H1 (cell line): ENCODE measurements at regions of chr4 and their contacts with region 1.

Region 1: DNA sequence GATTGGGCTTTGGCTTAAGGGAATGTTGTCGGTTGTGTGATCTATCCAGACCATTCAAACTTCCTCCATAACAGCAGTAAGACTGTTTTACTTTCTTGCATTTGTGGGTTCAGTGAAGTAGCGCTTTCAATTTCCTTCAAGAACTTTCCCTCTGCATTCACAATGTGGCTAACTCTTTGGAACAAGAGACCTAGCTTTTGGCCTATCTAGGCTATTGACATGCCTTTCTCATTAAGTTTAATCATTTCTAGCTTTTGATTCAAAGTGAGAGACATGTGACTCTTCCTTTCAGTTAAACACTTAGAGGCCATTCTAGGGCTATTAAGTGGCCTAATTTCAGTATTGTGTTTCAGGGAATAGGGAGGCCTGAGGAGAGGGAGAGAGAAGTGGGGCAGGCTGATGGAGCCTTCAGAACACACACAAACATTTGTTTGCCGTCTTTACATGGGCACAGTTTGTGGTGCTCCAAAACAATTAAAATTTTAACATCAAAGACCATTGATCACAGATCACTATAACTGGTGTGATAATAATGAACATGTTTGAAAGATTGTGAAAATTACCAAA is 34.1 kb downstream of the ADH5 start:
- DNase-seq: no peak
- H3K4me3 ChIP-seq: no peak overlapping the region
- H3K27ac ChIP-seq: no peak overlapping the region
- H3K4me1 ChIP-seq: 0 out of 7 replicates have a peak, but pooled peaks cover 0 to 1% (median 0%) of the 10 kb centered on the region in 4 experiments
- H3K27me3 ChIP-seq: no peaks in the 10 kb centered on the region
- CTCF ChIP-seq: no peak
- EP300 ChIP-seq: no peak
- POLR2A ChIP-seq: no peak
- RAD21 ChIP-seq: no peak

Region 2: DNA sequence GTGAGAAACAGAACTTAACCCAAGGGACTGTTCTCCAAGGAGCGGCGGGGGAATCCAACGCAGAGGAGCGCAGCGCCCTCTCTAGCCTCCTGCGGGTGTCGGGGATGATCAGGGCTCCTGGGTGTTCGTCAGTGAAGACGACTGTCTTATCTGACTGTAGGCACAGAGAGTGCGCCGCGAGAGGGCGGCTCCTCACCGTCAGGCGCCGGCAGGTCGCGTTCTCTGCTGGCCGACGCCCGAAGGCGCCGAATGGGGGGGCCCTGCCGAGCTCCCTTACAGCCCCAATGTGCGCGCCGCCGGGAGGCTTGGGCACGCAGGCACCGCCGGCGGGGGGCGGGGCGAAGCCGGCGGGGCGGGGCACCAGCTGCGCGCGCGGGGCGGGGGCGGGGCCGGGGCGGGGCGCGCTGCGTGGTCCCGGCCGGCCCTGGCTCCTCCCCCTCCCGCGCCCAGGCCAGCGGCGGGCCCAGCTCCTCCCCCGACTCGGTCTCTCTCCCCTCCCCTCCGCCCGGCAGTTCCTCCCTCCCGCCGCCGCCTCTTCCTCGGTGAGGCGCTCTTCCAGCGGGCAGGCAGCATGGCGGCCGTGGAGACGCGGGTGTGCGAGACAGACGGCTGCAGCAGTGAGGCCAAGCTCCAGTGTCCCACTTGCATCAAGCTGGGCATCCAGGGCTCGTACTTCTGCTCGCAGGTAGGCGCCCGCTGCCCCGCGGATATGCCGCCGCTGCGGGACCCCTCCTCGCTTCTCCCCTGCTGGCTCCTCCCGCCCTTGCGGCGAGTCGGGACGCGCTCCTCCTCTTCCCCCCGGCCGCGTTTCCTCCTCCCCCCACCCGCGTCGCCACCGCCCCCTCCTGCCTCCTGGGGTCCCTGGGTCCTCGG is 59.1 kb before region 1 on chr4 and contains the start of gene METAP1:
- CTCF ChIA-PET with region 1: interaction called, 20 read pairs
- POLR2A ChIA-PET with region 1: interaction called, 18 read pairs
- DNase-seq: peak; percentile 87 to 93
- H3K4me3 ChIP-seq: peak within 1 kb of the TSS; percentile 68 to 93 (median 90)
- H3K27ac ChIP-seq: peak within 1 kb of the TSS; percentile 97
- H3K4me1 ChIP-seq: peaks cover 0 to 5% (median 2%) of the 10 kb centered on the region in 4 experiments; a peak in 3 of 7 replicates
- H3K27me3 ChIP-seq: no peaks in the 10 kb centered on the region
- CTCF ChIP-seq: peak; percentile 55 to 80 (median 71)
- EP300 ChIP-seq: no peak
- POLR2A ChIP-seq: peak; percentile 90 to 91
- RAD21 ChIP-seq: peak; percentile 72 to 79
- total RNA-seq, gene METAP1: 80.9 and 85.2 TPM in 2 replicates

Region 3: GRCh38 chr4:99013402-99013843 is 41.1 kb before region 1 on chr4:
- CTCF ChIA-PET with region 1: interaction called, 11 read pairs
- POLR2A ChIA-PET with region 1: interaction called, 3 read pairs
- DNase-seq: no peak
- H3K4me3 ChIP-seq: no peak overlapping the region; a peak in 1 of 8 replicates
- H3K27ac ChIP-seq: no peak overlapping the region; the same call in 1 of the 2 replicates
- H3K4me1 ChIP-seq: peaks cover 0 to 2% (median 0%) of the 10 kb centered on the region in 4 experiments; a peak in 2 of 7 replicates
- H3K27me3 ChIP-seq: no peaks in the 10 kb centered on the region
- CTCF ChIP-seq: no peak
- EP300 ChIP-seq: 0 out of 3 replicates have a peak, but pooled peaks of 1 of the 2 experiments have one; percentile 2
- POLR2A ChIP-seq: peak in 1 of 2 experiments; percentile 63; a peak in 2 of 3 replicates
- RAD21 ChIP-seq: no peak

Region 4: DNA sequence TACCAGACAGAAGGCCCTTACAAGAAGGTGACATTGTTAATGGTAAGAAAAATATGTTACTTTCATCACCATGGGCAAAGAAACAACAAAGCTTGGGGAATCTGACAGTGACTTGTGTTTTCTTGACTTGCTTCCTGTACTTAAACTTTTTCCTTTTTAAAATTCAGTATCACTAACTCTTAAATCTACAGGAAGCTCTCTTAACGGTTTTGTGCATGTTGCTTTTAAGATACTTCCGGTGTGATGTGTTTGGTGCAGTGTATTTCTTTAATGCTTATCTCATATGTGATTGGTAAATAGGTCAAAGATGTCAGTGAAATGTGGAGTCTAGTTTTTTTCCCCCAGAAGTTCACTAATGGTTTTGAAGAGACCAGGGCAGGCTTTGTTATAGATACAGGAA is 11.2 kb before region 1 on chr4:
- CTCF ChIA-PET with region 1: interaction called, 14 read pairs
- POLR2A ChIA-PET with region 1: no interaction called
- DNase-seq: no peak
- H3K4me3 ChIP-seq: no peak overlapping the region
- H3K27ac ChIP-seq: no peak overlapping the region
- H3K4me1 ChIP-seq: no peaks in the 10 kb centered on the region
- H3K27me3 ChIP-seq: no peaks in the 10 kb centered on the region
- CTCF ChIP-seq: no peak
- EP300 ChIP-seq: no peak
- POLR2A ChIP-seq: no peak
- RAD21 ChIP-seq: no peak

Region 5: DNA sequence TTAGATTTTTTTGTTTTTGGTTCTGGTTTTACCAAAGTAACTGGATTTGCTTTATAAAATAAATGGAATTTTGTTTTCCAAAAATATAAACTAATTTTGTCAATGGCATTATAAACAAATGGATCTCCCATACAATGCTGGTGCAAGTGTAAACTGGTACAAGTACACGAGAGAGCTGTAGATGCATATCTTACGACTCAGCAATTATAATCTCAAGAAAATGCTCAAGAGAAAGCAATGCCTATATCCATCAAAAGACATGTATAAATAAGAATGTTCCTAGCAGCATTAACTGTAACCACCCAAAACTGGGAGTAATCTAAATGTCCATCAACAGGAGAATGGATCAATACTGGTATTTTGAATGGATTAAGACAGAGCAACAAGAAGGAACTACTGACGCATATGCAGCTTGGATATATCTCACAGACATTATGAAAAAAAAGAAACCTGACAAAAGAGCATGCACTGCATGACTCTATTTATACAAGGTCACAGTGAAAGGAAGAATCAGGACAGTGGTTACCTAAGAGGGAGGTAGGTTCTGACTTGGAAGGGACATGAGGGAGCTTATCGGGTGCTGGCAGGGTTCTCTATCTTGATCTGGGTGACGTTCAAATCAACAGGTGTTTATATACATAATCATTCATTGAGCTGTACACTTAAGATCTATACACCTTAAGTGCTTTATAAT is 24.6 kb after region 1 on chr4:
- CTCF ChIA-PET with region 1: interaction called, 10 read pairs
- POLR2A ChIA-PET with region 1: interaction called, 4 read pairs
- DNase-seq: no peak
- H3K4me3 ChIP-seq: no peak overlapping the region
- H3K27ac ChIP-seq: no peak overlapping the region
- H3K4me1 ChIP-seq: no peaks in the 10 kb centered on the region
- H3K27me3 ChIP-seq: no peaks in the 10 kb centered on the region
- CTCF ChIP-seq: no peak
- EP300 ChIP-seq: no peak
- POLR2A ChIP-seq: no peak
- RAD21 ChIP-seq: no peak